Activated T-helper 2 cell treated with anti-CD3 and anti-CD28 coated beads, Interferon-gamma antibody, Interleukin-2, Interleukin-4, amounts not matched to agents 10 μg/mL and 5 μg/mL and 100 μg/mL, durations not matched to agents 14 hours and 24 hours and 36 hours (primary cell): ENCODE measurements at regions of chr1 and their contacts with region 1.

Region 1: DNA sequence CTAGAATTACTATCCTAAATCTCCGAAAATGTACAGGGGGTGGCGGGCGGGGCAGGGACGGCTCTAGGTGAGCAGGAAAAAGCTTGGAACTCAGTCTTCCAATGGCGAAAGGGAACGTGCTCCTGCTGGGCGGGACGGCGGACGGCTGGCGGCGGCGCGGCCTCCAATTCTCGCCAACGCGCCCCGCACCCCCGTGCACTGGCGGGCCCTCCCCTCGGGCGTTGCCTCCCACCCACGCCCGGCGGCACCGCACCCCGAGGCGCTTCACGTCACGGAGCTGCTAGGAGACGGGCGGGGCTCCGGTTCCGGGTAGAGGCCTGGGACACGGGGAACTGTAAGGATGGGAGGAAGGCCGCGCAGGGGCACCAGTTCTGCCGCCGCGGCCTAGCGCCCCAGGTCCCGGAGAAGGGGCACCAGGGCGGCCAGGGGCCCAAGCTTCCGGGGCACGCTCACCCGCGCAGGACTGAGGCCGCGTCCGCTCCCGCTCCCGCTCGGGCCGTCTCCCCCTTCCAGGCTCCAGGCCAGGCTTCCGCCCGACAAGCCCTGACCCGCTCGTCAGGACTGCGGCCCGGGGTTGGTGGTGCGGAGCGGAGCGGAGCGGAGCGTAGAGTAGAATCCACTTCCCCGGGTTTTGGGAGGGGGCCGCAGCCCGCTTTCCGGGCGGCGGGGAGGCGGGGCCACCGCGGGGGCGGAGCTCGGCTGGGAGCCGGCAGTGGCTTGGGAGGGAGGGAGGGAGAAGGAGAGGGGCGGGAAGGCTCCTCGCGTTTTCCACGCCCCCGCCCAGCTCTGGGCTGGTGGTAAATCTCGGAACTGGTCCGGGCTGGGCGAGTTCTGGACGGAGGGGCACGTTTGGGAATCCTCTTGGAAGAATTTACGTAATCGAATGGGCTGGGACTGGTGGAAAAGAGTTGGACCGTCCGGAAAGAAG is at the start of gene DDX59:
- DNase-seq: peak; percentile 89
- H3K4me3 Mint-ChIP-seq: peak within 1 kb of the TSS; percentile 93
- H3K27ac Mint-ChIP-seq: peak within 1 kb of the TSS; percentile 92
- H3K4me1 Mint-ChIP-seq: peaks cover 25% of the 10 kb centered on the region
- H3K27me3 Mint-ChIP-seq: no peaks in the 10 kb centered on the region
- total RNA-seq, gene DDX59: 18.9 and 20.4 TPM in 2 replicates

Region 2: GRCh38 chr1:200150720-200151119 is 518.9 kb before region 1 on chr1:
- intact Hi-C with region 1: no loop called
- DNase-seq: no peak
- H3K4me3 Mint-ChIP-seq: no peak overlapping the region
- H3K27ac Mint-ChIP-seq: peak overlapping the region; percentile 73
- H3K4me1 Mint-ChIP-seq: peaks cover 47% of the 10 kb centered on the region
- H3K27me3 Mint-ChIP-seq: no peaks in the 10 kb centered on the region

Region 3: GRCh38 chr1:200653022-200653462 is 16.5 kb before region 1 on chr1:
- intact Hi-C with region 1: loop called (anchors 1 kb)
- DNase-seq: no peak
- H3K4me3 Mint-ChIP-seq: no peak overlapping the region
- H3K27ac Mint-ChIP-seq: peak overlapping the region; percentile 55
- H3K4me1 Mint-ChIP-seq: peaks cover 27% of the 10 kb centered on the region
- H3K27me3 Mint-ChIP-seq: no peaks in the 10 kb centered on the region

Region 4: DNA sequence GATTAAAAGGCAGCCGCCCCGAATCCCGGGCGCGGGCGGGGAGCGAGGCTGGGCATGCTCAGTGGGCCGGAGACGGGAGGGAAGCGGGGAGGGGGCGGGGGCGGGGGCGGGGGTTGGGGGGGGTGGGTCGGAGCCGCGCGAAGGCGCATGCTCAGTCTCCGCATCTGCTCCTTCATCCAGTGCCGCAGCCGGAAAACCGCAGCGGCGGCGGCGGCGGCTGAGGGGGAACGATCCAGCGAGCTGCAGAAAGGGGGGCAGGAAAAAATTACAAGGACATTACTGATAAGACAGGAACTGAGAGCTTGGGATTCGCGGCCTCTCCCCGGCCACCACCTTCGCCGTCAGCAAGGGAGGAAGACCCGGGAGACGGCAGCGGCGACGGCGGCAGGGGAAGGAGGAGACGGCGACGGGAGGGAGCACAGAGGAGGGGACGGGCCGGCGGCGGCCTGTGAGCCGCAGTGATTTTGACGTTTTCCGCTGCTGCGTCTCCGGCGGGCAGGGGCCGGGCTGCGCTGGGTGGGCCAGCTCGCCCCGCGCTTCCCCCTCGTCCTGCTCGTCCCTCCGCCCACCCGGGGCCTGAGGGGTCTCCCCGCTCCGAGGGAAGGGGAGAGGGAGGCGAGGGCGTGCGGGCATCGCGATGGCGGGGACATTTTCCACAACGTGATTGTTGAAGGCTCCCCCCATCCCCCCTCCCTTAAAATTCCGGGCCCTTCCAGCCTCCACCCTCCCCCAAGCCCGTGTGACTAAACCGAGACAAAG is 69.3 kb after region 1 on chr1 and contains the start of gene CAMSAP2:
- intact Hi-C with region 1: loop called (anchors 5 kb)
- DNase-seq: peak; percentile 52
- H3K4me3 Mint-ChIP-seq: peak within 1 kb of the TSS; percentile 83
- H3K27ac Mint-ChIP-seq: peak within 1 kb of the TSS; percentile 29
- H3K4me1 Mint-ChIP-seq: peaks cover 21% of the 10 kb centered on the region
- H3K27me3 Mint-ChIP-seq: peaks cover 49% of the 10 kb centered on the region
- total RNA-seq, gene CAMSAP2: 0.52 and 0.97 TPM in 2 replicates